Activated naive CD4-positive, alpha-beta T cell treated with anti-CD3 and anti-CD28 coated beads, Interleukin-2, amount 10 ng/mL, durations not matched to agents 7 days and 5 days (primary cell): ENCODE measurements at regions of chr1 and their contacts with region 1.

Region 1: GRCh38 chr1:67489643-67490042 is 59.4 kb upstream of the SERBP1 start:
- DNase-seq: no peak
- H3K4me3 Mint-ChIP-seq: no peak overlapping the region
- H3K27ac Mint-ChIP-seq: no peak overlapping the region
- H3K4me1 Mint-ChIP-seq: no peaks in the 10 kb centered on the region
- H3K27me3 Mint-ChIP-seq: peaks cover 4% of the 10 kb centered on the region

Region 2: DNA sequence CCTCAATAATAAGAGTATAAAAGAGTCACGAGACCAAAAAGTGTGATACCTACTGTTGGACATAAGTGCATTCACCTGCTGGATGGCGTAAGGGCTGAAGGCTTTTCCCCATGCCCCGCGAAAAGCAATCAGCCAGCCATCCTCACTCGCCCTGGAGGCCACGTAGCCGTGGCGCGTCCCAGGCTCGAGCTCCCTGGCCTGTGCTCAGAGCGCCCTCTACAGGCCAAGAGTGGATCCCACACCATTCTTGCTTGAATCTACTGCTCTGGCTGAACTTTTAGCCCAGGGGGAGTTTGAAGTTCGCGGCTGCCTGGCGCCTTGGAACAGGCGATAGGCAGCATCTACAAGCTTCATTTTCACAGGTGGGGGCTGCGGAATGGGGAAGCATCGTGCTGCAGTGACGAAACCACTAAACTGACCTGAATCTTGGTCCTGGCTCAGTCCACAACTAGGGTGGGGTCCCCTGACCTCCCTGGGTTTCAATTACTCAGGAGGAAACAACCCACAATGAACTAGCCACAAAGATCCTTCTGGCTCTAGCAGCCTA is 10.8 kb after region 1 on chr1:
- CTCF ChIA-PET with region 1: interaction called, 23 read pairs
- DNase-seq: peak; percentile 92
- H3K4me3 Mint-ChIP-seq: peak overlapping the region; percentile 18
- H3K27ac Mint-ChIP-seq: no peak overlapping the region
- H3K4me1 Mint-ChIP-seq: peaks cover 5% of the 10 kb centered on the region
- H3K27me3 Mint-ChIP-seq: peaks cover 21% of the 10 kb centered on the region